Motor neuron (in vitro differentiated cells): ENCODE measurements at regions of chr12 and their contacts with region 1.

Region 1: GRCh38 chr12:89574736-89575208 is 48.9 kb upstream of the POC1B start:
- ATAC-seq: peak in 1 of 8 experiments; percentile 26
- H3K4me3 ChIP-seq: no peak overlapping the region
- H3K27ac ChIP-seq: no peak overlapping the region
- H3K4me1 ChIP-seq: peaks cover 0 to 4% of the 10 kb centered on the region in 2 donors

Region 2: DNA sequence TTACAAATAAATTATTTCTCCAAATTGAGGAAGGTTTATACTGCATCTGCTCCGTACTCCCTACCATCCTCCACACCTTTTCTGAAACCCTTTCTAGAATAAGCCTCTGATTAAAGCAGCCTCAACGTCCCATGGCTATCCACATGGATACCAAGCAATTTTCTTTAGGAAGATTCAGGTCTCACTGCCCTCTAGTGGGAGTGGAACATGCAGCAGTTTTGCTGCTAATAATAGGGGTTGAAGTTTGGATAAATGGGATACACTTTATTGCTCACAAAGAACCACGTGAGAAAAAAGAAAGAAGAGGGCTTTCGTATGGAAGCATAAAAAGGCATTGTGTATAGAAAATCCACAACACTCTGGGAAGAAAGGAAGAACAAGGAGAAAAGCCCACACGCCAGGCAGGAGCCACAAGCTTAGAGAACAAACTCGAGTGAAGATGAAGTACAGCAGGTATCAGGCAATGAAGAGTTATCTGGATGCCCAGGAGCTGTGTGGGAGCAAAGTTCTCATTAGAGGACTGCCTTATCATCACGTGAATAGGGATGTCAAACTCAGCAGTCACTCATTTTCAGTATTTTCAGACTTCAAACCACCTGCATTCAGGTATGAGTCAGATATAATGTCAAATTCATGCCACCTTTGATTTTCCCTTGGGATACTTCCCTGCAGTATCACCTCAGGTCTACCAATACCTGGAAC is 1334.4 kb after region 1 on chr12:
- in situ Hi-C with region 1: loop called in 1 of 9 experiments (anchors 25 kb)
- ATAC-seq: peak in 5 of 8 experiments; percentile 33 to 68 (median 54)
- H3K4me3 ChIP-seq: no peak overlapping the region
- H3K27ac ChIP-seq: no peak overlapping the region
- H3K4me1 ChIP-seq: no peaks in the 10 kb centered on the region